ENCODE measurements at regions of chr19 and their contacts with region 1.

Region 1: DNA sequence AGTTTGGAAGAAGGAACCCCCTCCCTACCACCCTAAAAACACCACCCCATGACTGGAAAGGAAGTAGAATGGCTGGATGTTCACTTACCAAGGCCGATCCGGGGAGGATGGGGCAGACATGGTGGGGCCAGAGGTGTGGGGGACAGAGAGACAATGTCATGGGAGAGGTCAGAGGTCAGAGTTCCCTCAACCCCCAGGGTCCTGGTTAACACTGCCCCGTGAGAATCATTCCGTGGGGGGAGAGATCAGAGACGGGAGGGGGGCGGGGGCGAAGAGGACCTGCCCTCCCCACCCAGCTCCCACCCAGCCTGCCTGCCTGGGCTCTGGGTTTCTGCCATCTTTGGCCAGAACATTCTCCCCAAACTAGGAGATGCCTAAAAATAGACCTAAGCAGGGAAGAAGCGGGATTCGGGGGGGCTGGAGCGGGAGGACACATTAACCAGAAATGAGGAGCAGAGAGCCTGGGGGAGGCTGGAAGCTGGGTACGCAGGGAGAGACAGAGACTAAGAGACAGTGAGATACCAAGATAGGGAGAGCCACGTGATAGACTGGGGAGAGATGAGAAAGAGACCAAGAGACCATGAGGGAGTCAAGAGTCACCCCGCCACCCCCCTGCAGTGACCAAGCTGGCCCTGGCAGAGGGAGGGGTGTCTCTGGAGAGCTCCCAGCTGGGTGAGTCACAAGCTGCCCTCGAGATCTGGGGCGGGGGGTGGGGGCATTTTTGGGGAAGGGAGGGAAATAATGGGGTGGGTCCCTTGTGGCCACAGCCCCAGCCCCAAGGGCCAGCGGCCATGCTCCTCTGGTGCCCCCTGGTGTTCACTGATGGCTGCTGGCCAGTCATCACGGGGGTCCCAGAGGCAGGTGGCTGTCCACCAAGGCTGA is 6.1 kb upstream of the KANK2 start:
- DNase-seq: peak; percentile 87 to 96
- H3K4me3 ChIP-seq: peak overlapping the region; percentile 18 to 30
- H3K27ac ChIP-seq: peak overlapping the region; percentile 94 to 98
- H3K4me1 ChIP-seq: peaks cover 0 to 56% (median 39%) of the 10 kb centered on the region in 4 donors
- H3K27me3 ChIP-seq: no peaks in the 10 kb centered on the region
- CTCF ChIP-seq: peak; percentile 89 to 97

Region 2: DNA sequence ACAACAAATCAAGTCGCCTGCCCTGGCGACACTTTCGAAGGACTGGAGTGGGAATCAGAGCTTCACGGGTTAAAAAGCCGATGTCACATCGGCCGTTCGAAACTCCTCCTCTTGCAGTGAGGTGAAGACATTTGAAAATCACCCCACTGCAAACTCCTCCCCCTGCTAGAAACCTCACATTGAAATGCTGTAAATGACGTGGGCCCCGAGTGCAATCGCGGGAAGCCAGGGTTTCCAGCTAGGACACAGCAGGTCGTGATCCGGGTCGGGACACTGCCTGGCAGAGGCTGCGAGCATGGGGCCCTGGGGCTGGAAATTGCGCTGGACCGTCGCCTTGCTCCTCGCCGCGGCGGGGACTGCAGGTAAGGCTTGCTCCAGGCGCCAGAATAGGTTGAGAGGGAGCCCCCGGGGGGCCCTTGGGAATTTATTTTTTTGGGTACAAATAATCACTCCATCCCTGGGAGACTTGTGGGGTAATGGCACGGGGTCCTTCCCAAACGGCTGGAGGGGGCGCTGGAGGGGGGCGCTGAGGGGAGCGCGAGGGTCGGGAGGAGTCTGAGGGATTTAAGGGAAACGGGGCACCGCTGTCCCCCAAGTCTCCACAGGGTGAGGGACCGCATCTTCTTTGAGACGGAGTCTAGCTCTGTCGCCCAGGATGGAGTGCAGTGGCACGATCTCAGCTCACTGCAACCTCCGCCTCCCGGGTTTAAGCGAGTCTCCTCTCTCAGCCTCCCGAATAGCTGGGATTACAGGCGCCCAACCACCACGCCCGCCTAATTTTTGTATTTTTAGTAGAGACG is 114.0 kb before region 1 on chr19 and contains the start of gene LDLR:
- intact Hi-C with region 1: loop called (anchors 5 kb)
- DNase-seq: peak; percentile 82 to 93
- H3K4me3 ChIP-seq: peak within 1 kb of the TSS; percentile 59 to 78
- H3K27ac ChIP-seq: peak within 1 kb of the TSS; percentile 95 to 99
- H3K4me1 ChIP-seq: peaks cover 0 to 78% (median 56%) of the 10 kb centered on the region in 4 donors
- H3K27me3 ChIP-seq: no peaks in the 10 kb centered on the region
- CTCF ChIP-seq: no peak

Region 3: GRCh38 chr19:11227201-11227886 is 23.9 kb after region 1 on chr19:
- intact Hi-C with region 1: no loop called
- DNase-seq: no peak
- H3K4me3 ChIP-seq: no peak overlapping the region
- H3K27ac ChIP-seq: no peak overlapping the region
- H3K4me1 ChIP-seq: no peaks in the 10 kb centered on the region
- H3K27me3 ChIP-seq: no peaks in the 10 kb centered on the region
- CTCF ChIP-seq: no peak

Region 4: GRCh38 chr19:11261941-11262839 is 58.8 kb after region 1 on chr19 and contains the start of gene DOCK6:
- intact Hi-C with region 1: no loop called
- DNase-seq: no peak
- H3K4me3 ChIP-seq: peak within 1 kb of the TSS; percentile 96 to 99
- H3K27ac ChIP-seq: peak within 1 kb of the TSS; percentile 81 to 91
- H3K4me1 ChIP-seq: peaks cover 0 to 16% (median 9%) of the 10 kb centered on the region in 4 donors
- H3K27me3 ChIP-seq: no peaks in the 10 kb centered on the region
- CTCF ChIP-seq: peak; percentile 33 to 39